Motor neuron (in vitro differentiated cells): ENCODE measurements at regions of chr7 and their contacts with region 1.

Region 1: DNA sequence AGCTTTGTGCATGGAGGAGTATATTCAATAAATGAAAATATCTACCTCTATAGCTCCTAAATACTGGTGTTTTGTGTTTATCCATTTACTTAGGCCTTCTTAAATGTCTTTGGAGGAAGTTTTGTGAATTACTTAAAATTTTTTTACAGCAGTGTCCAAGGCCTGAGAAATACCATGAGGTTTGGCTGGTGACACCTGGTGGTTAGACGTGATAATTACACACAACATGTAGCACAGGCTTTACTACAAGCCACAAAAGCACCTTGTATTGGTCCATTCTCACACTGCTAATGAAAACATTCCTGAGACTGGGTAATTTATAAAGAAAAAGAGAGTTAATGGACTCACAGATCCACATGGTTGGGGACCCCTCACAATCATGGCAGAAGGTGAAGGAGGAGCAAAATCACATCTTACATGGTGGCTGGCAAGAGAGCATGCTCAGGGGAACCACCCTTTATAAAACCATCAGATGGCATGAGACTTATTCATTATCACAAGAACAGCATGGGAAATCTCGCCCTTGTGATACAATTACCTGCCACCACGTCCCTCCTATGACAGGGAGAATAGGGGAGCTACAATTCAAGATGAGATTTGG is 20.6 kb downstream of the HYAL4 start:
- ATAC-seq: peak in 5 of 8 experiments; percentile 42 to 81 (median 76)
- H3K4me3 ChIP-seq: no peak overlapping the region
- H3K27ac ChIP-seq: no peak overlapping the region
- H3K4me1 ChIP-seq: no peaks in the 10 kb centered on the region

Region 2: DNA sequence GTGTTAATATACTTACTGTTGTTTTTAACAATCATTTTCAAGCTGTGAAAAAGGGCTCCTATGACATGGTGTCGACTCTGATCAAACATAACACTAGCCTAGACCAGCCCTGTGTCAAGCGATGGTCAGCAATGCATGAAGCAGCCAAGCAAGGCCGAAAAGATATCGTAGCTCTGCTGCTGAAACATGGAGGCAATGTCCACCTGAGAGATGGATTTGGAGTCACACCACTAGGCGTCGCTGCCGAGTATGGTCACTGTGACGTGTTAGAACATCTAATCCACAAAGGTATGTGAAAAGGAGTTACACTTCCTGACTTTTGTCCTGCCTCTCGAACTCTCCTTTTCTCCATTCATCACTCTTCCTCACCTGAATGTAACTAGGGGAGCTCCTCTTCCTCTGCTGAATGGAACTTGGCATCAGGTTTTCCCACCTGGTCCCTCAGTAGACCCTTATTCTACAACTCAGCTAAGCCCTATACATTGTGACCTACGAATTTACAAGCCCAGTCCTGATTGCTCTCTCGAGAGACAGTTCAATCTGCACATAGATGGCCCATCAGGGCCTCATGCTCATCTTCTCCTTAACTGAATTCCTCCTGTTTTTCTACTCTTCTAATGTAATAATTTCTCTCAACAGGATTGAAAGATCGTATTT is 241.0 kb before region 1 on chr7:
- in situ Hi-C with region 1: loop called in 3 of 9 experiments (anchors 25 kb)
- ATAC-seq: peak in 2 of 8 experiments; percentile 43 to 52
- H3K4me3 ChIP-seq: no peak overlapping the region
- H3K27ac ChIP-seq: no peak overlapping the region
- H3K4me1 ChIP-seq: peaks cover 0 to 4% of the 10 kb centered on the region in 2 donors

Region 3: GRCh38 chr7:123805287-123805686 is 60.3 kb before region 1 on chr7:
- in situ Hi-C with region 1: loop called in 1 of 9 experiments (anchors 10 kb)
- ATAC-seq: no peak
- H3K4me3 ChIP-seq: no peak overlapping the region
- H3K27ac ChIP-seq: no peak overlapping the region
- H3K4me1 ChIP-seq: no peaks in the 10 kb centered on the region